Vagina (tissue), 2 donors: ENCODE measurements at regions of chr3 and their contacts with region 1.

Region 1: DNA sequence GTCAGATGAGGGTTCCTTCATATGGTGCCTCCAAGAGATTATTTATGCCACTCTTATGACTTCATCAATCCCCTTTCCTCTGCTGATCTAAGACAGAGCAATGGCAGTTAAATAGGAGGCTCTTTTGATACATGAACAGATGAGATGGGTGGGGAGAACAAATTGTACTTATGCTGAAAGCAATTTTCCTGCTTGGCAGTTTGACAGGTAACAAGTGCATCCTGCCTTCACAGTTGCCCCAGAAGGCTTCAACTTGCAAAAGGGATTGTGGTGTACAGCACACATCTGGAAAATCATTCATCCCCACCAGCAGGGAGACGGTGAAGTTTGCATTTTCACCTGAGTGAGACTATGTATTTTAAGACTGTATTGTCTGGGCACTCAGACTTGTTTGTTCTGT is 27.3 kb downstream of the ENTPD3 start:
- DNase-seq: no peak
- H3K4me3 ChIP-seq: no peak overlapping the region
- H3K27ac ChIP-seq: no peak overlapping the region
- H3K4me1 ChIP-seq: no peaks in the 10 kb centered on the region
- H3K27me3 ChIP-seq: no peaks in the 10 kb centered on the region
- CTCF ChIP-seq: no peak
- POLR2A ChIP-seq: no peak

Region 2: DNA sequence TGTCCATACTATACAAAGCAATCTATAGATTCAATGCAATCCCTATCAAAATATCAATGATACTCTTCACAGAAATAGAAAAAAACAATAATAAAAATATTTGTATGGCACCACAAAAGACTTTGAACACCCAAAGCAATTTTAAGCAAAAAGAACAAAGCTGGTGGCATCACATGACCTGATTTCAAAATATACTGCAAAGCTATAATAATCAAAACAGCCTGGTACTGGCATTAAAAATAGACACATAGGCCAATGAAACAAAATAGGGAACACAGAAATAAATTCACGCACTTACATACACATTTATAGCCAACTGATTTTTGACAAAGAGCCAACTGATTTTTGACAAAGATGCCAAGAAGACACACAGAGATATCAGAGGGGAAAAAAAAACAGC is 36.4 kb before region 1 on chr3:
- intact Hi-C with region 1: loop called (anchors 1 kb)
- DNase-seq: no peak
- H3K4me3 ChIP-seq: no peak overlapping the region
- H3K27ac ChIP-seq: no peak overlapping the region
- H3K4me1 ChIP-seq: no peaks in the 10 kb centered on the region
- H3K27me3 ChIP-seq: no peaks in the 10 kb centered on the region
- CTCF ChIP-seq: no peak
- POLR2A ChIP-seq: no peak

Region 3: DNA sequence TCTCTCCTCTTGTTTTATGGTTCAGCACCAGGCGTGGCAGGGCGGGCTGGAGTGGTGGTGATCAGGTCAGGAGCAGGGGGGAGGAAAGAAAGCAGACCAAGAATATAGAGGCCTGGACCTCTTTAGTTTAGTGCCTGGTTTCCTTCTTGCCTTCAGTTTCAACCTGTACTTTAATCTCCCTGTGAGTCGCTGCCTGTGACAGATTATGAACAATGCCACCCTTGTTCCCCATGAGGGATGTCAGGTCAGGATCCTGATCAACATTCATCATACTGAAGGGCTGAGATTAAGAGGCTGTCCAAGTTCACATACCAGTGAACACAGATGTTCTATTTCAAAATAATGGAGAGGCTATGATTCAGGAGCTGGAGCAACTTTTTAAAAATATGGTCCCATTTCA is 15.9 kb before region 1 on chr3:
- intact Hi-C with region 1: no loop called
- DNase-seq: no peak
- H3K4me3 ChIP-seq: no peak overlapping the region
- H3K27ac ChIP-seq: no peak overlapping the region
- H3K4me1 ChIP-seq: no peaks in the 10 kb centered on the region
- H3K27me3 ChIP-seq: no peaks in the 10 kb centered on the region
- CTCF ChIP-seq: no peak
- POLR2A ChIP-seq: no peak